GM13977 (cell line): ENCODE measurements at regions of chr1 and their contacts with region 1.

Region 1: GRCh38 chr1:107529502-107530149 is 388.8 kb downstream of the NTNG1 start:
- DNase-seq: peak; percentile 68
- CTCF ChIP-seq: peak; percentile 88

Region 2: GRCh38 chr1:107196973-107197562 is 332.6 kb before region 1 on chr1:
- in situ Hi-C with region 1: loop called (anchors 25 kb)
- DNase-seq: peak; percentile 2
- CTCF ChIP-seq: peak; percentile 63